Caco-2 (cell line): ENCODE measurements at regions of chr18 and their contacts with region 1.

Region 1: GRCh38 chr18:23259701-23260582 is 124.7 kb downstream of the CABLES1 start:
- DNase-seq: peak; percentile 90 to 95
- H3K4me3 ChIP-seq: peak overlapping the region; percentile 9; the same call in 1 of the 2 replicates
- H3K4me3 Mint-ChIP-seq: peak overlapping the region; percentile 75
- H3K27ac Mint-ChIP-seq: peak overlapping the region; percentile 95
- H3K4me1 ChIP-seq: peaks cover 18% of the 10 kb centered on the region
- H3K4me1 Mint-ChIP-seq: peaks cover 9% of the 10 kb centered on the region
- H3K27me3 ChIP-seq: no peaks in the 10 kb centered on the region
- H3K27me3 Mint-ChIP-seq: no peaks in the 10 kb centered on the region
- CTCF ChIP-seq: no peak

Region 2: GRCh38 chr18:23077493-23078256 is 182.3 kb before region 1 on chr18:
- CTCF ChIA-PET with region 1: no interaction called
- POLR2A ChIA-PET with region 1: no interaction called
- intact Hi-C with region 1: loop called (anchors 1 kb)
- DNase-seq: peak; percentile 77 to 81
- H3K4me3 ChIP-seq: no peak overlapping the region
- H3K4me3 Mint-ChIP-seq: peak overlapping the region; percentile 7
- H3K27ac Mint-ChIP-seq: peak overlapping the region; percentile 50
- H3K4me1 ChIP-seq: peaks cover 9% of the 10 kb centered on the region
- H3K4me1 Mint-ChIP-seq: peaks cover 19% of the 10 kb centered on the region
- H3K27me3 ChIP-seq: no peaks in the 10 kb centered on the region
- H3K27me3 Mint-ChIP-seq: no peaks in the 10 kb centered on the region
- CTCF ChIP-seq: peak; percentile 45 to 70

Region 3: GRCh38 chr18:23311351-23312121 is 51.6 kb after region 1 on chr18:
- CTCF ChIA-PET with region 1: no interaction called
- POLR2A ChIA-PET with region 1: no interaction called
- intact Hi-C with region 1: loop called (anchors 10 kb)
- DNase-seq: no peak
- H3K4me3 ChIP-seq: no peak overlapping the region
- H3K4me3 Mint-ChIP-seq: no peak overlapping the region
- H3K27ac Mint-ChIP-seq: no peak overlapping the region
- H3K4me1 ChIP-seq: no peaks in the 10 kb centered on the region
- H3K4me1 Mint-ChIP-seq: no peaks in the 10 kb centered on the region
- H3K27me3 ChIP-seq: no peaks in the 10 kb centered on the region
- H3K27me3 Mint-ChIP-seq: no peaks in the 10 kb centered on the region
- CTCF ChIP-seq: no peak

Region 4: GRCh38 chr18:23356915-23357601 is 97.1 kb after region 1 on chr18:
- CTCF ChIA-PET with region 1: interaction called, 3 read pairs
- POLR2A ChIA-PET with region 1: no interaction called
- intact Hi-C with region 1: loop called (anchors 5 kb)
- DNase-seq: no peak
- H3K4me3 ChIP-seq: no peak overlapping the region
- H3K4me3 Mint-ChIP-seq: no peak overlapping the region
- H3K27ac Mint-ChIP-seq: no peak overlapping the region
- H3K4me1 ChIP-seq: peaks cover 7% of the 10 kb centered on the region
- H3K4me1 Mint-ChIP-seq: no peaks in the 10 kb centered on the region
- H3K27me3 ChIP-seq: no peaks in the 10 kb centered on the region
- H3K27me3 Mint-ChIP-seq: no peaks in the 10 kb centered on the region
- CTCF ChIP-seq: no peak

Region 5: GRCh38 chr18:23401400-23402347 is 141.7 kb after region 1 on chr18:
- CTCF ChIA-PET with region 1: no interaction called
- POLR2A ChIA-PET with region 1: no interaction called
- intact Hi-C with region 1: loop called (anchors 10 kb)
- DNase-seq: peak; percentile 43 to 69
- H3K4me3 ChIP-seq: no peak overlapping the region
- H3K4me3 Mint-ChIP-seq: no peak overlapping the region
- H3K27ac Mint-ChIP-seq: peak overlapping the region; percentile 79
- H3K4me1 ChIP-seq: peaks cover 28% of the 10 kb centered on the region
- H3K4me1 Mint-ChIP-seq: peaks cover 8% of the 10 kb centered on the region
- H3K27me3 ChIP-seq: no peaks in the 10 kb centered on the region
- H3K27me3 Mint-ChIP-seq: no peaks in the 10 kb centered on the region
- CTCF ChIP-seq: no peak